CD4-positive, alpha-beta memory T cell (primary cell): ENCODE measurements at regions of chr12 and their contacts with region 1.

Region 1: DNA sequence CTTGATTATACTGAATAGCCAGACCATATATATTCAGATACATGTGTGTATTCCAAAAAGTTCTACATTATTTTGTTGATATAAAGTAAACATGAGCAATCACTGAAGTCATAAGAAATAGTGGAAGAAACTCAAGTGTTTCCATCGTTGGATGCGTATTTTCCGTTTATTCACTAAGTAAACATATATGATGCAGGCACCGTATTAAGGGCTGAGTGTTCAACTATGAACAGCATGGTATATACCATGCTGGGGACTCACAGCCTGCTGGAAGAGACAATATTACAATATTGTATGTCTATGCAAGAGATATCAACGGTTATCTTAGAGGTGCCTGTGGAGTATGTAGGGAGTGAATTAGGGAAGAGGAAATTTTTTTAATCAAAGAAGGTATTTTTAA is 1.2 kb downstream of the PYROXD1 start:
- DNase-seq: no peak
- H3K4me3 ChIP-seq: peak overlapping the region; percentile 92 to 94
- H3K4me3 Mint-ChIP-seq: peak overlapping the region; percentile 97 to 100 (median 98)
- H3K27ac ChIP-seq: peak overlapping the region; percentile 81
- H3K27ac Mint-ChIP-seq: peak overlapping the region; percentile 97 to 99 (median 98)
- H3K4me1 ChIP-seq: peaks cover 53% of the 10 kb centered on the region
- H3K4me1 Mint-ChIP-seq: peaks cover 27 to 66% (median 46%) of the 10 kb centered on the region in 4 donors
- H3K27me3 ChIP-seq: no peaks in the 10 kb centered on the region
- H3K27me3 Mint-ChIP-seq: no peaks in the 10 kb centered on the region

Region 2: GRCh38 chr12:21451529-21451928 is 12.9 kb after region 1 on chr12:
- CTCF ChIA-PET with region 1: interaction called, 6 read pairs
- POLR2A ChIA-PET with region 1: interaction called, 67 read pairs
- intact Hi-C with region 1: loop called (anchors 1 kb)
- DNase-seq: no peak
- H3K4me3 ChIP-seq: no peak overlapping the region
- H3K4me3 Mint-ChIP-seq: peak overlapping the region in 1 of 8 donors; percentile 53
- H3K27ac ChIP-seq: no peak overlapping the region
- H3K27ac Mint-ChIP-seq: peak overlapping the region in 5 of 7 donors; percentile 2 to 88 (median 67)
- H3K4me1 ChIP-seq: peaks cover 40% of the 10 kb centered on the region
- H3K4me1 Mint-ChIP-seq: peaks cover 27 to 43% (median 37%) of the 10 kb centered on the region in 4 donors
- H3K27me3 ChIP-seq: no peaks in the 10 kb centered on the region
- H3K27me3 Mint-ChIP-seq: no peaks in the 10 kb centered on the region

Region 3: DNA sequence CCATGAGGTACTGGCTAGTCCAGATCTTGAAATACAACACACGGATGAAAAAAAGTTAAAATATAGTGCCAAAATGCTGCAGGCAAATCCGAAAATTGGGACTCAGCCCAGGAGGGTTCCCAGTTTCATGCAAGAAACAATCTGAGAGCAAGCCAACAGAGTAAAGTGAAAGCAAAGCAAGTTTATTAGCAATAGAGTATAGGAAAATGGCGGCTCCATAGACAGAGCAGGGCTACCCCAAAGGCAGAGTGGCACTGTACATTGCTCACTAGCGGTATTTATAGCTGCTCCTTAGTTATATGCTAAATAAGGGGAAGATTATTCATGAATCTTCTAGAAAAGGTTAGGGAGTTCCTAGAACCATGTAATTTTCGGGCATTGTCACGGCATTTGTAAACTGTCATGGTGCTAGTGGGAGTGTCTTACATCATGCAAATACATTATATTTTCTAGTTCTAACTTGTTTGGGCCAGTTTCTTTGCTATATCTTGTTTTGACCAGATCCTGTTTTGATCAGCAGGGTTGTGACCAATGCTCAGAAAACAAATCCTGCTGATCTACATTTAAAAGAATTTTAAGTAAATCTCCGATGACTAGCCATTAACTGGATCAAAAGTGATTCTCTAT is 33.7 kb after region 1 on chr12:
- CTCF ChIA-PET with region 1: no interaction called
- POLR2A ChIA-PET with region 1: interaction called, 3 read pairs
- intact Hi-C with region 1: loop called (anchors 5 kb)
- DNase-seq: no peak
- H3K4me3 ChIP-seq: no peak overlapping the region
- H3K4me3 Mint-ChIP-seq: no peak overlapping the region
- H3K27ac ChIP-seq: no peak overlapping the region
- H3K27ac Mint-ChIP-seq: peak overlapping the region in 3 of 7 donors; percentile 9 to 41 (median 36)
- H3K4me1 ChIP-seq: no peaks in the 10 kb centered on the region
- H3K4me1 Mint-ChIP-seq: peaks cover 0 to 4% (median 2%) of the 10 kb centered on the region in 4 donors
- H3K27me3 ChIP-seq: no peaks in the 10 kb centered on the region
- H3K27me3 Mint-ChIP-seq: no peaks in the 10 kb centered on the region

Region 4: GRCh38 chr12:21551841-21552465 is 113.3 kb after region 1 on chr12:
- CTCF ChIA-PET with region 1: no interaction called
- POLR2A ChIA-PET with region 1: no interaction called
- intact Hi-C with region 1: no loop called
- DNase-seq: no peak
- H3K4me3 ChIP-seq: no peak overlapping the region
- H3K4me3 Mint-ChIP-seq: no peak overlapping the region
- H3K27ac ChIP-seq: no peak overlapping the region
- H3K27ac Mint-ChIP-seq: no peak overlapping the region
- H3K4me1 ChIP-seq: no peaks in the 10 kb centered on the region
- H3K4me1 Mint-ChIP-seq: no peaks in the 10 kb centered on the region
- H3K27me3 ChIP-seq: no peaks in the 10 kb centered on the region
- H3K27me3 Mint-ChIP-seq: no peaks in the 10 kb centered on the region